ENCODE measurements at regions of chr10 and their contacts with region 1.

Region 1: GRCh38 chr10:102101152-102101551 is 19.0 kb downstream of the LDB1 start:
- DNase-seq: no peak
- ATAC-seq: no peak
- H3K4me3 ChIP-seq: no peak overlapping the region
- H3K4me3 Mint-ChIP-seq: no peak overlapping the region
- H3K27ac ChIP-seq: no peak overlapping the region
- H3K27ac Mint-ChIP-seq: no peak overlapping the region
- H3K4me1 ChIP-seq: peaks cover 3 to 13% of the 10 kb centered on the region in 2 experiments
- H3K4me1 Mint-ChIP-seq: peaks cover 11 to 13% (median 12%) of the 10 kb centered on the region in 3 donors
- H3K27me3 ChIP-seq: no peaks in the 10 kb centered on the region
- H3K27me3 Mint-ChIP-seq: no peaks in the 10 kb centered on the region

Region 2: GRCh38 chr10:102033787-102034186 is 67.4 kb before region 1 on chr10:
- CTCF ChIA-PET with region 1: no interaction called
- POLR2A ChIA-PET with region 1: no interaction called
- DNase-seq: no peak
- ATAC-seq: no peak
- H3K4me3 ChIP-seq: no peak overlapping the region
- H3K4me3 Mint-ChIP-seq: no peak overlapping the region
- H3K27ac ChIP-seq: no peak overlapping the region
- H3K27ac Mint-ChIP-seq: no peak overlapping the region
- H3K4me1 ChIP-seq: no peaks in the 10 kb centered on the region
- H3K4me1 Mint-ChIP-seq: no peaks in the 10 kb centered on the region
- H3K27me3 ChIP-seq: no peaks in the 10 kb centered on the region
- H3K27me3 Mint-ChIP-seq: no peaks in the 10 kb centered on the region

Region 3: DNA sequence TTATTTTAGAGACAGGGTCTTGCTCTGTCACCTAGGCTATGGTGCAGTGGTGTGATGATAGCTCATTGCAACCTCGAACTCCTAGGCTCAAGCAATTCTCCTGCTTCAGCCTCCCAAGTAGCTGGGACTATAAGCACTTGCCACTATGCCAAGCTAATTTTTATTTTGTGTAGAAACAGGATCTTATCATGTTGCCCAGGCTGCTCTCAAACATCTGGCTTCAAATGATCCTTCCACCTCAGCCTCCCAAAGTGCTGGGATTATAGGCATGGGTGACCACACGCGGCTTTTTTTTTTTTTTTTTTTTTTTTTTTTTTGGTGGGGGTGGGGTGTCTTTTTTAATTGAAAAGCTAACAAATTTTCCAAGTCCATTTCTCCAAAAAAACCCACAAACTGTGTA is 17.6 kb before region 1 on chr10:
- CTCF ChIA-PET with region 1: no interaction called
- POLR2A ChIA-PET with region 1: interaction called in 1 of 2 experiments, 14 read pairs
- DNase-seq: no peak
- ATAC-seq: no peak
- H3K4me3 ChIP-seq: no peak overlapping the region
- H3K4me3 Mint-ChIP-seq: no peak overlapping the region
- H3K27ac ChIP-seq: no peak overlapping the region
- H3K27ac Mint-ChIP-seq: no peak overlapping the region
- H3K4me1 ChIP-seq: no peaks in the 10 kb centered on the region
- H3K4me1 Mint-ChIP-seq: no peaks in the 10 kb centered on the region
- H3K27me3 ChIP-seq: no peaks in the 10 kb centered on the region
- H3K27me3 Mint-ChIP-seq: no peaks in the 10 kb centered on the region